Colonic mucosa (tissue), 4 donors: ENCODE measurements at regions of chr2 and their contacts with region 1.

Region 1: GRCh38 chr2:226800941-226801784 is 1.5 kb upstream of the IRS1 start:
- DNase-seq: peak; percentile 94
- H3K4me3 ChIP-seq: peak overlapping the region; percentile 68
- H3K27ac ChIP-seq: peak overlapping the region; percentile 83
- H3K4me1 ChIP-seq: no peaks in the 10 kb centered on the region
- H3K27me3 ChIP-seq: no peaks in the 10 kb centered on the region
- CTCF ChIP-seq: no peak

Region 2: GRCh38 chr2:225668606-225669266 is 1132.4 kb before region 1 on chr2:
- intact Hi-C with region 1: loop called (anchors 5 kb)
- DNase-seq: peak; percentile 22
- H3K4me3 ChIP-seq: no peak overlapping the region
- H3K27ac ChIP-seq: no peak overlapping the region
- H3K4me1 ChIP-seq: no peaks in the 10 kb centered on the region
- H3K27me3 ChIP-seq: no peaks in the 10 kb centered on the region
- CTCF ChIP-seq: peak; percentile 74

Region 3: DNA sequence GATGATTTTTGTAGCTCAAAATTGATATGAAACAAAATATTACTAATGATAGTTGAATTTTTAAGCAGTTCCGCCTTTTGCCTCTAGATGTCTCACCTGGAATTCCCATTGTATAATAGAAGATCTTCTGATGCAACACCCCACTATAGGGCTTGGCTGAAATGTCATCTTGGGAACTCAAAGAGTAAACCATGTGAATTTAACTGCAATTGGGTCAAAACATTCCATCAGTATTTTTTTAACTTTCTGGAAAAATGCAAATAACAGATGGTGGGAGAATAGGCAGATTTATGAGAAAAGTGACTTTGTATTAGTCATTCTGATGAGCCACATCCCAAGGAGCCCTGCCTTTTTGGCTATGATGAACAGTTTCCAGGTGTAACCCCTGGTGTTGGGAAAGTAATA is 911.7 kb before region 1 on chr2:
- intact Hi-C with region 1: loop called (anchors 2 kb)
- DNase-seq: peak; percentile 30
- H3K4me3 ChIP-seq: no peak overlapping the region
- H3K27ac ChIP-seq: no peak overlapping the region
- H3K4me1 ChIP-seq: no peaks in the 10 kb centered on the region
- H3K27me3 ChIP-seq: no peaks in the 10 kb centered on the region
- CTCF ChIP-seq: peak; percentile 57

Region 4: GRCh38 chr2:226215902-226216503 is 585.2 kb before region 1 on chr2:
- intact Hi-C with region 1: loop called (anchors 2 kb)
- DNase-seq: peak; percentile 78
- H3K4me3 ChIP-seq: no peak overlapping the region
- H3K27ac ChIP-seq: no peak overlapping the region
- H3K4me1 ChIP-seq: no peaks in the 10 kb centered on the region
- H3K27me3 ChIP-seq: no peaks in the 10 kb centered on the region
- CTCF ChIP-seq: peak; percentile 71

Region 5: DNA sequence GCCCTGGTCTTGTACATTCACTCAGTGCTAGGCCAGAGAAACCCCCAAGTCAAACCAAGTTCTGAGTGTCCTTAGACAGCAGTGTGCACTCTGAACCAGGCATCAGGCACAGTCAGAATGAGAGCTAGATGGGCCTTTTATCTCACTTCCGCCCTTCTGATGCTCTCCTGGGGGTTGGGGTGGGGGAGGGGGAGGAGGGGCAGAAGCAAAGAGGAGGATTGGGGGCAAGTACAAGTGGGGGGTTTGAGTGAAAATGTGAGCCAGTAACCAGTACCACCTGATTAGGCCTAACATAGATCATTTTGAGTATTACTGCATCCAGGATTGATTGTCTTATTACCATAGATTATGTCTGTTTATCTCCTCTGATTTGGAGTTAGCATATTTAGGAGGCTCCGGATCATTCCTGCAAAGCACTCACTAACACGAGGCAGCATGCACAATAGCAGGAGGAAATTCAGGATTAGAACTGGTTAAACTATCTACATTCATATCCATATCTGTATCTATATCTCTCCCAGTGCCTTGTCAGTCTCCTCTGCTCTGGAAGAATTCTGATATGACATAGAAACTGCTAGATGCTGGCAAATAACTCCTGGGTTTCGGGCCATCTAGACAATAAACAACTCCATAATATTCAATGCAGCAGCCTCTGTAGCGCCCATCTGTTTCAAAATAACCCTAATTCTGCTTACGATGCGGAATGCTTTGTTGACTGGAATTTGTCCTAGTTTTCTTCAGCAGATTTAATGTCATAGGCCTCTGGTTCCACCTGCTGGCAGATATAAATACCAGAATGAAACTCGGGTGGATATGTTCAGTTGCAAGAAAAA is 183.8 kb after region 1 on chr2:
- intact Hi-C with region 1: loop called (anchors 5 kb)
- DNase-seq: peak; percentile 41
- H3K4me3 ChIP-seq: no peak overlapping the region
- H3K27ac ChIP-seq: no peak overlapping the region
- H3K4me1 ChIP-seq: no peaks in the 10 kb centered on the region
- H3K27me3 ChIP-seq: no peaks in the 10 kb centered on the region
- CTCF ChIP-seq: peak; percentile 42

Region 6: GRCh38 chr2:227106845-227107759 is 305.9 kb after region 1 on chr2:
- intact Hi-C with region 1: loop called (anchors 5 kb)
- DNase-seq: peak; percentile 55
- H3K4me3 ChIP-seq: no peak overlapping the region
- H3K27ac ChIP-seq: no peak overlapping the region
- H3K4me1 ChIP-seq: no peaks in the 10 kb centered on the region
- H3K27me3 ChIP-seq: no peaks in the 10 kb centered on the region
- CTCF ChIP-seq: peak; percentile 68